Posterior cingulate gyrus (tissue), 11 donors: ENCODE measurements at regions of chr3 and their contacts with region 1.

Region 1: DNA sequence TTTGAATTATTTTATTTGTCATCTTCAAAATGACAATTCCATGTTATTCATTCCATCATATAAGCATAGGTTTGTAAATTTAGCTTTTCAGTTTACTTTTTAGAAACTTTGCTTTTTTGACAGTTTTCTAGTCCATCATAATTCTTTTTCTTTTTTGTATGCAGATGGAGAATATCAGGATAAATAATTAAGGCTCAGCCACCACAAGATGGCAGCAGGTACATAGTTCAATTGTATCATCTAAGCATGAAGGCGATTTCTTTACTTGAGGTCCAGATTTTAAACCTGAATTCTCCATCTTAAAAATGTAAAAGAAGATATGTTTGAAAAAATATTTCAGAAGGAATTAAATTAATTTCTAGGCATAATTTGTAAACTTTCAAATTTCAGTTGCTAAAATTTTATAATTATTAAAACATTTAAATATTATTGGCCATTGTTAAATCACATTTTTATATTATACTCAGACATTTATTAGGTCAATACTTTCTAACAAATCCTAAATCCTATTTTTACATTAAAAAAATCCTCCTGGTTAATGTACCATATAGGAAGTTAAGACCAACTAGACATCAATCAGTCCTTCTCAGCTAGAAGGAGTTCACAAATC is 15.1 kb downstream of the PLSCR5 start:
- DNase-seq: peak in 2 of 10 donors; percentile 17 to 21

Region 2: GRCh38 chr3:146044046-146044445 is 546.0 kb before region 1 on chr3:
- intact Hi-C with region 1: no loop called
- DNase-seq: no peak

Region 3: DNA sequence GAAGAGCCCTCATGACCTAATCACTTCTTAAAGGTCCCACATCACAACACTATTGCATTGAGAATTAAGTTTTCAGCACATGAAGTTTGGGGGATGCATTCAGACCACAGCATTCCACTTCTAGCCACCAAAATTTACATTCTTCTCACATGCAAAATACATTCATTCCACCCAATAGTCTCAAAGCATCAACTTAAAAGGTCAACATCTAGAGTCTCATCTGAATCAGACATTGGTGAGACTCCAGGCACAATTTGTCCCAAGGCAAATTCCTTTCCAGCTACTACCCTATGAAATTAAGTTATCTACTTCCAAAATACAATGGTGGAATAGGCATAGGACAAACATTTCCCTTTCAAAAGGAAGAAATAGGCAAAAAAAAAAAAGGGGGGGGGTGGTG is 185.6 kb before region 1 on chr3:
- intact Hi-C with region 1: no loop called
- DNase-seq: no peak

Region 4: GRCh38 chr3:146640955-146641867 is 51.2 kb after region 1 on chr3:
- intact Hi-C with region 1: loop called (anchors 2 kb)
- DNase-seq: no peak

Region 5: GRCh38 chr3:146895026-146895749 is 305.2 kb after region 1 on chr3:
- intact Hi-C with region 1: no loop called
- DNase-seq: no peak